ENCODE measurements at regions of chr1 and their contacts with region 1.

Region 1: GRCh38 chr1:151459331-151460046 is at the start of gene POGZ:
- DNase-seq: peak; percentile 98
- ATAC-seq: peak; percentile 96
- total RNA-seq, gene POGZ: 37.7 TPM

Region 2: GRCh38 chr1:151165738-151166505 is 293.6 kb before region 1 on chr1 and contains the starts of genes LYSMD1 and SCNM1:
- intact Hi-C with region 1: no loop called
- DNase-seq: peak; percentile 97
- ATAC-seq: peak; percentile 95
- total RNA-seq, gene LYSMD1: 12.3 TPM
- total RNA-seq, gene SCNM1: 16.6 TPM

Region 3: GRCh38 chr1:151472856-151473731 is 13.6 kb after region 1 on chr1:
- intact Hi-C with region 1: loop called (anchors 1 kb)
- DNase-seq: peak; percentile 74
- ATAC-seq: peak; percentile 70

Region 4: DNA sequence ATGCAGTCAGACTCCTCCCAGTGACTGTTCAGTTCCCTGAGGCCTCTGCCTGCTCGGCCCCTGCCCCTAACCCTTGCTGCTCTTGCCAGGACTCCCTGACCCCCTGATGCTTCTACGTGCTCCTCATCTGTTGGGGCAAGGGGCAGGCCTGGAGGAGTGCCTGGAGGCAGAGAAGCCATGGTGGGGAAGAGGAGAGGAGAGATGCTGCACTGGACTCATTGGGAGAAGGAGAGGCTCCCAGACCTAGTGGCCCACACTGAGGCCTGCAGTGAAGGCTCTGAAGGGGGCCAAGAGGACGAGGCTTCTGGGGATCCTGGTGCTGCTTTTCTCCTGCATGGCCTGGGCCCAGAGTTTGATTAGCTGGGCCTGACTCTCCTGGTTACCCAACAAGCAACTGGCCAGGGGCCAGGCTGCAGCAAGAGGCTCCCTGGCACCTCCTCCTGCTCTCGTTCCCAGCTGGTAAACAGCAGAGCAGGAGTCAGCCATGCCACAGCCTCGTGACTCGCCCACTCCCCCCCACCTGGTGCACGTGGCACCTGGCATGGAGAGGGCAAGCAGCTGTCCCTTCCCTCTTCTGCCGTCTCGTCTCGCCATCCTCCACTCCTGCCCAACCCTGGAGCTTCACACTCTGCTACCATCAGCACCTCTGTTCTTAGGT is 373.0 kb after region 1 on chr1:
- intact Hi-C with region 1: loop called (anchors 5 kb)
- DNase-seq: peak; percentile 88
- ATAC-seq: peak; percentile 77

Region 5: GRCh38 chr1:152328801-152329391 is 869.4 kb after region 1 on chr1:
- intact Hi-C with region 1: no loop called
- DNase-seq: no peak
- ATAC-seq: no peak

Measured in Right ventricle myocardium inferior (tissue), 1 donor.